Psoas muscle (tissue), 8 donors: ENCODE measurements at regions of chr3 and their contacts with region 1.

Region 1: DNA sequence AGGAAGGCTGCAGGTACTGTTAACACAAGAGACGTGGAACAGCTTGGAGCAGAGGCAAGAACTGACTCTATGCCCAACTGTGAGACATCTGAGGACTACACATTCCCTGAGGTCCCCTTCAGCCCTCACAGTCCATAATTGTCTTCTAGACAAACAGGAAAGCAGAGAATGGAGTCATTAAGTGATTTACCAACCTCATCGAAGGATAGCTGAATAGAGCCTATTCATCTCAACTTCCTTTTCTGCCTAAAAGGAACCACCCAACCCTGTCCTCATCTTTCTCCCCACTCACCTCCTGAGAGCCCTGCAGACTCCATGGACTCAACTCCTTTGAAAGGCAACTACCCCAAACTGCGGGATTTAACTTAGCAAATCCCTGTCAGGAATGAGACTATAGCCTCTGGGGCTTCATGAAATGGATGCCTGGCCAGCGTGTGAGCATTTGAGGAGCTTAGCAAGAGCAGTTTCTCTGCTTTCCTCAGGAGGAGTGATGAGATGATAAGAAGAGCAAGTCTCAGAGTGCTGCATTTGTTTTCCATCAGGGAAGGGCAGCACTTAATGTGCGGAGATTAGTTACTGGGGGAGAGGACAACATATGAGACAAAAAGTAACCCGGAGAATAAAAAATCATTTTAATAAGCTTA is 61.5 kb upstream of the FILIP1L start:
- DNase-seq: no peak
- ATAC-seq: no peak
- H3K4me3 ChIP-seq: no peak overlapping the region
- H3K27ac ChIP-seq: no peak overlapping the region
- H3K4me1 ChIP-seq: peaks cover 7% of the 10 kb centered on the region
- H3K27me3 ChIP-seq: no peaks in the 10 kb centered on the region
- CTCF ChIP-seq: no peak

Region 2: DNA sequence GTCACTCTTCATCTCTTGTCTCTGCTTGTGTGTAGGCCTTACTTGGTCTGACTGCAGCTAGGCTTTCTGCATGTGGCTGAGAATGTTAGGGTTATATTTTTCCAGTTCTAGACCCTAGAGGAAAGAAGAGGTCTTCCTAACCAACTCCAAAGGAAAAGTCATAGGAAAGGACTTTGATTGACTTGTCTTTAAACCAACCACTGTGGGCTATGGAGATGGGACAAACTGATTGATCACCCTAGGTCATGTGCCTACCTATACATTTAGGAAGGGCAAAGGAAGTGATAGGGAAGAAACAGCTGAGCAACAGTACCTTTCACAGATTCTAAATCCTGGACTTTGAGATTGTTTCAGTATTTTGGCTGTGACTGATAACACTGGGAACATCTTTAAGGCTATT is 68.5 kb after region 1 on chr3:
- intact Hi-C with region 1: loop called in 1 of 2 experiments (anchors 5 kb)
- DNase-seq: no peak
- ATAC-seq: no peak
- H3K4me3 ChIP-seq: no peak overlapping the region
- H3K27ac ChIP-seq: no peak overlapping the region
- H3K4me1 ChIP-seq: no peaks in the 10 kb centered on the region
- H3K27me3 ChIP-seq: no peaks in the 10 kb centered on the region
- CTCF ChIP-seq: no peak